Heart right ventricle (tissue), 16 donors: ENCODE measurements at regions of chr5 and their contacts with region 1.

Region 1: DNA sequence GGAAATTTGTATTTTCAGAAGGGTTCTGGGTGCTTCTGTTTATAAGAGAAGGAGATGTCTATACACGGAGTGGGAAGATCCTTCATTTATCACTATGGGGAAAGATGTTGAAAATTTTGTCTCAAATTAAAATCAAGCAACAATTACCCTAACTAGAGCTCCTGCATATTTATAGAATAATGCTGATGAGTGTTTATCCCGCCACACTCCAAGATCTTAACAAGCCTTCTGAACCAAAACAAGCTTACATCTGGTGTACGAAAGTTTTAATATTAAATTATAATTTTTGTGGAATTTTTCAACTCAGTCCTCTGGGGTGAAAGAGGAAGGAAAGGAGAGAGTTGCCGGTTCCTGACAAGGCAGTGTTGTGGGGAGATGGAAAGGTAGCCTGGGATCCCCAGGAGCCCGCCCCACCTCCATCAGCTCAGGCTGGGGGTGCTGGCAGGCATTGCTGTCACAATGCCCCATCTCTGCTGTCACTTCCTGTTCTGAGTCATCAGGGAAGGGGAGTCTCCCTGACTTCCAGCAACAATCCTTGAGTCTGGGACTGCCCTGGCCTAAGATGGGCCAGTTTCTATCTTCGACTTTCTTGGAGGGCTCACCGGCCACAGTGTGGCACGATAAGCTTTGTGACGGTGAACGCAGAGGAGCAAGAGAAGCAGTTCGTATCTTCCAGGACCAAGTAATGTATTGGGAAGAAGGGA is 64.5 kb downstream of the ERAP1 start:
- DNase-seq: peak; percentile 44 to 52
- ATAC-seq: peak in 7 of 8 donors; percentile 57 to 80 (median 74)
- H3K4me3 ChIP-seq: peak overlapping the region in 7 of 10 donors; percentile 5 to 25 (median 18)
- H3K27ac ChIP-seq: peak overlapping the region; percentile 38 to 90 (median 74)
- H3K4me1 ChIP-seq: peaks cover 9 to 72% (median 44%) of the 10 kb centered on the region in 9 donors
- H3K27me3 ChIP-seq: no peaks in the 10 kb centered on the region
- CTCF ChIP-seq: no peak

Region 2: GRCh38 chr5:96344678-96345577 is 398.3 kb before region 1 on chr5:
- intact Hi-C with region 1: loop called in 1 of 10 experiments (anchors 10 kb)
- DNase-seq: peak in 1 of 2 donors; percentile 25
- ATAC-seq: peak in 7 of 8 donors; percentile 64 to 91 (median 85)
- H3K4me3 ChIP-seq: no peak overlapping the region
- H3K27ac ChIP-seq: no peak overlapping the region
- H3K4me1 ChIP-seq: peaks cover 0 to 11% (median 2%) of the 10 kb centered on the region in 9 donors
- H3K27me3 ChIP-seq: no peaks in the 10 kb centered on the region
- CTCF ChIP-seq: peak; percentile 16 to 74 (median 61)

Region 3: DNA sequence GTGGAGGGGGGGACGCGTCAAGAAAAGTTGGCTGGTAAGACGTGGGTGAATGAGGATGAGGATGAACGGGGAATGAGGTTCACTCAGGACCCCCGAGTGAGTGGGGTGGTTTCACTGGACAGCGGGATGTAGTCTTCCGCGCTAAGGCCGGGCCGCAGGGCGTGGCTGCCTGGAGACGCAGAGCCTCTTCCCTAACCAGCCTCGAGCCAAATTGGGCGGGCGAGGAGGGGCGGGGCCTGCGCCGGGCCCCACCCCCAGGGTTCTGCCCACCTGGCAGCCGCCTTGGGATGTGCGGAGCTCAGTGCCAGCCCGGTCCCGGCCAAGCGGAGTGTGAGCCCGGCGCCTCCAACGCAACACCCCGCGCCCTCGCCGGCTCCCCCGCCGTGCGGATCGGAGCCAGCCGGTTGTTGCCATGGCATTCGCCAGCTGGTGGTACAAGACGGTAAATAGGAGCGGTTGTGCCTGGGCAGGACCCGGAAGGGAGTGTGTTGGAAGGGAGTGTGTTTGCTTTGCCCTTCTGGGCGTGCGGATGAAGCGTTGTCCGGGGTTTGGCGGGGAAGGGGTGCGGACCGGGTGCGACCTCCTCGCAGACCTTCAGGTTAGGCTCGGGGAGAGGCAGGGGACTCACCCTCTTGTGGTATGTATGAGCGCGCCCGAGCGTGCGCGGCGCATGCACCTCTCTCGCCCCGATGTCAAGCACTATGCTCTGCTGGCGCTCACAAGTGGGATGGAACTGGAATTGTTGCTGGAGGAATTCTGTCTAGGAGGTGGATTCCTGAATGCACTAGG is 80.3 kb before region 1 on chr5:
- intact Hi-C with region 1: loop called in 2 of 10 experiments (anchors 10 kb)
- DNase-seq: peak; percentile 90 to 94
- ATAC-seq: peak; percentile 92 to 97 (median 94)
- H3K4me3 ChIP-seq: peak overlapping the region; percentile 72 to 98 (median 94)
- H3K27ac ChIP-seq: peak overlapping the region; percentile 82 to 100 (median 98)
- H3K4me1 ChIP-seq: peaks cover 0 to 45% (median 27%) of the 10 kb centered on the region in 9 donors
- H3K27me3 ChIP-seq: no peaks in the 10 kb centered on the region
- CTCF ChIP-seq: peak in 1 of 9 donors; percentile 10

Region 4: DNA sequence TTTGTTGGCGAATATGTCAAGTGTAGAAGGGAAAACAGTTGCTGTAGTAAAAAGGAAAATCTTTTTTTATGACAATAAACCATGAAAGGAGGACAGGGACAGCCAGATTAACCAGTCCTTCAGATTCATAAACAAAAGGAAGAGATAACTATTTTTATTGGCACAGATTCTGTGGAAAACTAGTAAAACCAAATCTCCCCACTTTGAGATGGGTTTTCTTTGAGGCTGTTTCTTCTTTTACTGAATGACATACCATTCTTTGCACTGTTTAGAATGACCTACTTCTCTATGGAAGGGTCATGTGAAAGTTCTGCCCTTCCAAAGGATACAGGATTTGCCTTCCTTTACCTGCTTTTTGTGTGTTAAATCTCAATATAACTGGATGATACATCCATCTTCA is 67.3 kb before region 1 on chr5:
- intact Hi-C with region 1: no loop called
- DNase-seq: no peak
- ATAC-seq: no peak
- H3K4me3 ChIP-seq: no peak overlapping the region
- H3K27ac ChIP-seq: no peak overlapping the region
- H3K4me1 ChIP-seq: peaks cover 0 to 49% (median 19%) of the 10 kb centered on the region in 9 donors
- H3K27me3 ChIP-seq: no peaks in the 10 kb centered on the region
- CTCF ChIP-seq: no peak

Region 5: GRCh38 chr5:96702503-96703383 is 40.5 kb before region 1 on chr5:
- intact Hi-C with region 1: loop called in 2 of 10 experiments (anchors 5 kb)
- DNase-seq: peak; percentile 94 to 95
- ATAC-seq: peak; percentile 97 to 99 (median 98)
- H3K4me3 ChIP-seq: peak overlapping the region; percentile 55 to 84 (median 72)
- H3K27ac ChIP-seq: peak overlapping the region; percentile 90 to 98 (median 95)
- H3K4me1 ChIP-seq: peaks cover 0 to 80% (median 46%) of the 10 kb centered on the region in 9 donors
- H3K27me3 ChIP-seq: no peaks in the 10 kb centered on the region
- CTCF ChIP-seq: no peak

Region 6: DNA sequence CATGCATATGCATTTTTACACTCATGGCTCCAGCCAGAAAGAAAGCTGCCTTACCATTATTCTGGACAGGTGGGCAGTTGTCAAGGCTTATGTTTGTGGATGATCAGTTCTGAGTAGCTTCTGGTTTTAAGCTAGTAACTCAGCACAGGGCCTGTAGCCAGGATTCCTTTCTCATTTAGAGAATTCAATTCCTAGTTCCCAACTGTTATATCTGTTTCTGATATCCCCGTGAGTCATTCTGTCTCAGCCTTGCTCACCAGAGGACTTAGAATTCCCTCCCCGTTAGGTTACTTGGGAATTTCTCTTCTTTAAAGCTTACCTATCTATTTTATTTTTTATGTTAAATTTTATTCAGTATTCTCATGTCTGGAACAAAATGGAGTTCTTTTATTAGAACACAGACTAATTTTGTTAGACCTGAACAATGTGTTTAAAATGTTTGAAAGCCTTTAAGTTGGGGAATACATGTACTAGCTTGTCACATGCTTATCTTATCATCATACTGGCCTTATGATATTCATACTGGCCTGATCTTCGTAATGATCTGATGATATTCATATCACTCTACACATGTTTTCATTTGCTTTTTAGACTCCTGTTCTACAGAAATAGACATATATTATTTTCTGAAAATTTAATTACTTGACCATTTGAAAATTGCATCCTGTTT is 33.9 kb before region 1 on chr5:
- intact Hi-C with region 1: loop called in 2 of 10 experiments (anchors 5 kb)
- DNase-seq: no peak
- ATAC-seq: peak in 6 of 8 donors; percentile 28 to 67 (median 42)
- H3K4me3 ChIP-seq: no peak overlapping the region
- H3K27ac ChIP-seq: peak overlapping the region; percentile 18 to 80 (median 56)
- H3K4me1 ChIP-seq: peaks cover 0 to 100% (median 65%) of the 10 kb centered on the region in 9 donors
- H3K27me3 ChIP-seq: no peaks in the 10 kb centered on the region
- CTCF ChIP-seq: no peak